Activated T-helper 2 cell treated with anti-CD3 and anti-CD28 coated beads, Interferon-gamma antibody, Interleukin-2, Interleukin-4, amounts not matched to agents 10 μg/mL and 5 μg/mL and 100 μg/mL, durations not matched to agents 14 hours and 24 hours and 36 hours (primary cell): ENCODE measurements at regions of chr19 and their contacts with region 1.

Region 1: DNA sequence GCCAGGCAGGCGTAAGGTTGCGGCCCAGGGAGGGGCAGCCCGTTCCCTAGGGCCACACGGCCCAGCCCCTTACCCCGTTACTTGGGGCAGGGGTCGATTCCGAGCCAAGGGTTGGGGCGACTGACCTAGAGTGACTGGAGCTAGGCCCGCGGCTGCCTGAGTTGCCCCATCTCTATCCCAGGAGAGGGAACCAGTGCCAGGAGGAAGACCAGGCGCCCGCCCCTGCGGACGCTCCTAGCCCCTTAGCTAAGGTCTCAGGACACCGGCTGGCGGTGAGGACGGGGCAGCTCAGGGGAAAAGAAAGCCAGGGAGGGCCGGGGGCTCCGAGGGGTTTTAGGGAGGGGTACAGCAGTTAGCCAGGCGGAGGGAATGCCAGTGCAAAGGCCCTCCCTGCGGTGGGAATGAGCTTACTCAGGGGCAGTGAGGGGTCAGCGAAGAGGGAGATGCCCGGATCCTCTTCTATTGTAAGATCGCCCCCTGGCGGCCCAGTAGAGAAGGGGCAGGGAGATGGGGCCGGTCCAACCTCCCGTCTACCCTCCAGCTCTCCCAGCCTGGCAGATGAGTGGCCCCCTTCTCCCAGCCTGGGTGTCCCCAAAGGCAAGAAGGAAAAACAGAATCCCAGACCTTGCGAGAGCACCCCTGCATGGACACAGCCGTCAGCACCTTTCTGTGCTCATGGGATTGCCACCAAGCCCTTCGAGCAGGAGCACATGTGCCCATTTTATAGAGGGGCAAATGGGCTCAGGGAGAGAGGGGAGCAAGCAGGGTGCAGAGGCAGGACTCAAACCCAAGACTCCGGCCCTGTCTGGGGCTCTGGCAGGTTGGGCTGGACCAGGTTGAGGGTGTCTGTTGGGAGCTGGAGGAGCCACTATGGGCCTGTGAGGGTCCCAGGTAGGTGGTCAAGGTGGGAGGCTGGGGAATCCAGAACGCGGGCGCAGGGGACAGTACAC is 16.3 kb downstream of the CILP2 start:
- DNase-seq: peak; percentile 40
- H3K4me3 Mint-ChIP-seq: no peak overlapping the region
- H3K27ac Mint-ChIP-seq: no peak overlapping the region
- H3K4me1 Mint-ChIP-seq: peaks cover 2% of the 10 kb centered on the region
- H3K27me3 Mint-ChIP-seq: no peaks in the 10 kb centered on the region

Region 2: GRCh38 chr19:19520989-19521388 is 33.4 kb before region 1 on chr19:
- intact Hi-C with region 1: no loop called
- DNase-seq: no peak
- H3K4me3 Mint-ChIP-seq: no peak overlapping the region
- H3K27ac Mint-ChIP-seq: no peak overlapping the region
- H3K4me1 Mint-ChIP-seq: peaks cover 6% of the 10 kb centered on the region
- H3K27me3 Mint-ChIP-seq: no peaks in the 10 kb centered on the region

Region 3: DNA sequence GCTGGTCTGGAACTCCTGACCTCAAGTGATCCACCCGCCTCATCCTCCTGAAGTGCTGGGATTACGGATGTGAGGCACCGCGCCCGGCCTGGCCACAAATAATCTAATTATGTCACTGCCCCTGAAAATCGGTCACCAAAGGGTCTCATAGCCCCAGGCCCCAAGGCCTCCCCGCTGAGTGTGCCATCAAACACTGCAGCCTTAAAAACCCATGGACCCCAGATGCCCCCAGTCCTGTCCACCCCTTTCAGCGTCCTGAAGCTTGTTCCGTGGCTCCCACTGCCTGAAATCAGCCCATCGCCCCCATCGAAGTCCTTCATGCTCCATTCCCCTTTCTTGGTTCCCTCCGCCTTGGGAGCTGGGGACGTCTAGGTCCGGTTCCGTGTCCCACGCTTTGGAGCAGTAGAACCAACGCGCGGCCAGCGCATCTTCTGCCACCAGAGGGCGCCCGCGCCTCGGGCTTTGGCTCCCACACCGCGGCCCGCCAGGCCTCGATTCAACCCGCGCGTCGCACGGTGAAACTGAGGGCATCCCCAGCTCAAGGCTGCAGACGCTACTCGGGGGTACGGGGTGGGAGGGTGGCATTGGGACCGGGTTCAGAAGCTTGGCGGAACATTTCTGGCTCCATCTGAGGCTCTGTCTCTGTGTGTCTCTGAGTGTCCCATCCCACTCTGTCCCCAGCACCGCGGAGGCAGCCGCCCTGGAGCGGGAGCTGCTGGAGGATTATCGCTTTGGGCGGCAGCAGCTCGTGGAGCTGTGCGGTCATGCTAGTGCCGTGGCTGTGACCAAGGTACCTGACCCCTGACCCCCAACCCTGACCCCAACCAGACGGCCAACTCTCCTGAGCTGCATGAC is 22.2 kb before region 1 on chr19:
- intact Hi-C with region 1: loop called (anchors 1 kb)
- DNase-seq: peak; percentile 76
- H3K4me3 Mint-ChIP-seq: no peak overlapping the region
- H3K27ac Mint-ChIP-seq: no peak overlapping the region
- H3K4me1 Mint-ChIP-seq: peaks cover 4% of the 10 kb centered on the region
- H3K27me3 Mint-ChIP-seq: peaks cover 5% of the 10 kb centered on the region

Region 4: GRCh38 chr19:19627621-19628500 is 73.5 kb after region 1 on chr19 and contains the start of gene LPAR2:
- intact Hi-C with region 1: no loop called
- DNase-seq: peak; percentile 56
- H3K4me3 Mint-ChIP-seq: peak within 1 kb of the TSS; percentile 92
- H3K27ac Mint-ChIP-seq: peak within 1 kb of the TSS; percentile 87
- H3K4me1 Mint-ChIP-seq: peaks cover 18% of the 10 kb centered on the region
- H3K27me3 Mint-ChIP-seq: no peaks in the 10 kb centered on the region
- total RNA-seq, gene LPAR2: 28.9 and 29.8 TPM in 2 replicates